ENCODE measurements at regions of chr18 and their contacts with region 1.

Region 1: GRCh38 chr18:13159579-13159978 is 59.0 kb upstream of the LDLRAD4 start:
- DNase-seq: peak; percentile 17
- H3K4me3 ChIP-seq: no peak overlapping the region
- CTCF ChIP-seq: peak; percentile 46

Region 2: GRCh38 chr18:13003466-13003896 is 156.1 kb before region 1 on chr18:
- CTCF ChIA-PET with region 1: interaction called, 30 read pairs
- POLR2A ChIA-PET with region 1: no interaction called
- DNase-seq: no peak
- H3K4me3 ChIP-seq: no peak overlapping the region
- CTCF ChIP-seq: peak; percentile 60

Region 3: GRCh38 chr18:13112982-13113381 is 46.6 kb before region 1 on chr18:
- CTCF ChIA-PET with region 1: interaction called, 10 read pairs
- POLR2A ChIA-PET with region 1: no interaction called
- DNase-seq: no peak
- H3K4me3 ChIP-seq: no peak overlapping the region
- CTCF ChIP-seq: peak; percentile 59

Region 4: DNA sequence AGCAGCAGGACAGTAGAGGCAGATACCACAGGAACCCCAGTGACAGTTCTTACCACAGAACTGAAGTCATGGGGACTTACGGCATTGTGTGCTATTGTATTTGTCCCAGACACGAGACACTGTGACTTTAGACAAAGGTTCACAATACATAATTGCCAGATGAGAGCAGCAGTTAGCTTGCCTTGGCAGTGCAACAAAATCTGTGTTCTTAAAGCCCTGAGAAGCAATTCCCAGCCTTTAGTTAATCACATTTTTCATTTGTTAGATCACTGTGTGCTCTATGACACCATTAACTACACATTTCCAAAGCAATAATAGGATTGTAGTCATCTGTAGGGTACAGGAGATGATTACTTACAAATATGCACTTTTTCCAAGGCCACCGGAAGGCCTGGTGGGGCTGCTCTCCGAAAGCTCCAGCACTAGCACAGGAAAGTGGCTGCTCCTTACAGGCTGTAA is 38.6 kb before region 1 on chr18:
- CTCF ChIA-PET with region 1: interaction called, 12 read pairs
- POLR2A ChIA-PET with region 1: no interaction called
- DNase-seq: peak; percentile 73
- H3K4me3 ChIP-seq: no peak overlapping the region
- CTCF ChIP-seq: no peak

Region 5: DNA sequence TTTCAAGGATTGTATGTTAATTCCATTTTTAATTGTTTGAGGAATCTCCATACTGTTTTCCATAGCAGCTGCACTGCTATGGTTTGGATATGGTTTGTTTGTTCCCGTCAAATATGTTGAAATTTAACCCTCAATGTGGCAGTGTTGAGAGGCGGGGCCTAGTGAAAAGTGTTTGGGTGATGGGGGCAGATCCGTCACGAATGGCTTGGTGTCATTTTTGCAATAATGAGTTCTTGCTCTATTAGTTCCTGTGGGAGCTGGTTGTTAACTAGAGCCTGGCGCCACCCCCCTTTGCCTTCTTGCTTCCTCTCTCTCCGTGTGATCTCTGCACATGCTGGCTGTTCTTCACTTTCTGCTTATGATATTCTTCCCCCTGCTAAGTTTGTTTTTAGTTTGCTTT is 12.4 kb before region 1 on chr18:
- CTCF ChIA-PET with region 1: interaction called, 15 read pairs
- POLR2A ChIA-PET with region 1: no interaction called
- DNase-seq: no peak
- H3K4me3 ChIP-seq: no peak overlapping the region
- CTCF ChIP-seq: no peak

Region 6: DNA sequence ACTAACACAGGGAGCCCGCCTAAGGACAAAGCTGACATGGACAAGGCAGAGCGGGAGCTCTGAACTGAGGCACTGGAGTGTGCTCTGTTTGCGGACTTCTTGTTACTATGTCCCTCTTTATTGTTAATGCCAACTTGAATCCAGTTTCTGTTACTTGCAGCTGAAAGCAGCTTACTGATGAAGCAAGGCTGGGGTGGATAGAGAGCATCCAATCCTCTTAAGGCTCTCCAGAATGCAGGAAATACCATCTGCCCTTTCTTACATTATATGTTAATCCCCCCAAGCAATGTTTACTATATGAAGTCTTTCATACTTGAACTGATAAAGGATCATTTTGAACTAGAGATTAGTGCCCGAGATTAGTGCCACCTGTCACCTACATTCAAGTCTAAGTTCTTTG is 557.3 kb after region 1 on chr18:
- CTCF ChIA-PET with region 1: no interaction called
- POLR2A ChIA-PET with region 1: no interaction called
- DNase-seq: no peak
- H3K4me3 ChIP-seq: no peak overlapping the region
- CTCF ChIP-seq: no peak

Measured in AG04449 (cell line).